GM12878 (cell line): ENCODE measurements at regions of chr15 and their contacts with region 1.

Region 1: DNA sequence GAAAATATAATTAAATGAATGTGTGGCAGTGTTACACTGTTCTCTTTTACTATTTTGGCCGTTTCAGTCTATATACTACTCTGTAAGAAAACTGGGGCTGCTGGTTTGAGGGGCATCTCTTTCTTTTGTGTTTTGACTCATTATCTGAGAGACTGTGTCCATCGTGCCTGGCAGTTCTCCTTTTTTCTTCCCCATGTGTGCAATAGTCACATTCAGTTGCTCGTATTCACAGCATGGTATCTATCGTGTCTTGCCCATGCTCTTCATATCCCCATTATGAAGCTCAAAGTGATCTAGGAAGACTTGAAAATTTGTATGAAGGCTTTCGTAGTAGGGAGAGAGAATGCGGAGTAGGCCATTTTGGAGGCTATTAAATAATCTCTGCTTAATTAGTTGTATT is 29.8 kb upstream of the FAH start:
- DNase-seq: no peak
- ATAC-seq: no peak
- H3K4me3 ChIP-seq: no peak overlapping the region
- H3K27ac ChIP-seq: no peak overlapping the region
- H3K4me1 ChIP-seq: no peaks in the 10 kb centered on the region
- H3K27me3 ChIP-seq: no peaks in the 10 kb centered on the region
- CTCF ChIP-seq: no peak
- EP300 ChIP-seq: no peak
- POLR2A ChIP-seq: no peak
- RAD21 ChIP-seq: no peak

Region 2: GRCh38 chr15:80031841-80032240 is 91.2 kb before region 1 on chr15:
- CTCF ChIA-PET with region 1: no interaction called
- POLR2A ChIA-PET with region 1: no interaction called
- RAD21 ChIA-PET with region 1: no interaction called
- SMC1A ChIA-PET with region 1: no interaction called
- in situ Hi-C with region 1: no loop called
- intact Hi-C with region 1: no loop called
- DNase-seq: no peak
- ATAC-seq: peak; percentile 35
- H3K4me3 ChIP-seq: no peak overlapping the region
- H3K27ac ChIP-seq: no peak overlapping the region; the same call in 1 of the 2 replicates
- H3K4me1 ChIP-seq: peaks cover 47% of the 10 kb centered on the region
- H3K27me3 ChIP-seq: no peaks in the 10 kb centered on the region
- CTCF ChIP-seq: no peak
- EP300 ChIP-seq: no peak
- POLR2A ChIP-seq: no peak
- RAD21 ChIP-seq: no peak

Region 3: GRCh38 chr15:80136854-80137253 is 13.8 kb after region 1 on chr15:
- CTCF ChIA-PET with region 1: interaction called, 10 read pairs
- POLR2A ChIA-PET with region 1: no interaction called
- RAD21 ChIA-PET with region 1: no interaction called
- SMC1A ChIA-PET with region 1: interaction called, 3 read pairs
- in situ Hi-C with region 1: no loop called
- intact Hi-C with region 1: no loop called
- DNase-seq: no peak
- ATAC-seq: no peak
- H3K4me3 ChIP-seq: no peak overlapping the region
- H3K27ac ChIP-seq: no peak overlapping the region
- H3K4me1 ChIP-seq: no peaks in the 10 kb centered on the region
- H3K27me3 ChIP-seq: no peaks in the 10 kb centered on the region
- CTCF ChIP-seq: no peak
- EP300 ChIP-seq: no peak
- POLR2A ChIP-seq: no peak
- RAD21 ChIP-seq: no peak